Endothelial cell of umbilical vein (primary cell): ENCODE measurements at regions of chr12 and their contacts with region 1.

Region 1: DNA sequence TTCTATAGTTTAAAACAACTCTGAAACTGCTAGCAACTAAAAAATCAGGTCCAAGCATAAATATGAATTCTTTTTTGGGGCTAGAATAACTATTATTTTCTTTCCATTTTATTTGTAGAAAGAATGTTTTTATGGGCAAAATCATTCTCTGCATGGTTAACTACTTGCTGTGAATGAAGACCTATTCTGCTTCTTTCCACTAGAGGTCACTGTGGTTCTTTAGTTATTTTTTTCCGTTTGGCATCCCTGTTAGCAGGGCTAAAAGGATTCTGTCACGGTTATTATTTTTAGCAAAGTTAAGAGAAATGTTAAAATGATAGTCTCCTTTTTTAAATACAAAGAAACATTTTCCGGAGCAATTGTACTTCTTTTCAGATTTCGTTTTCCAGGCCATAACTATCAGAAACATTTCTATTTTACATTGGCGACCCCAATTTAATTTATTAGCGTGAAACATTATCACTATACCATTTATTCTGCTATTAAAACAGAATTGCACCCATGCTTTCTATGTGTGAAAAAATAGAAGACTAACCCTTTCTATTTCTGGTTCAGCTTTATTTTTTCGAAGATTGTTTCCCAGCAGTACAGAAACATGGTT is 404.8 kb downstream of the ATP23 start:
- DNase-seq: peak; percentile 58
- H3K4me3 ChIP-seq: no peak overlapping the region
- H3K27ac ChIP-seq: no peak overlapping the region
- H3K4me1 ChIP-seq: peaks cover 22% of the 10 kb centered on the region
- H3K27me3 ChIP-seq: no peaks in the 10 kb centered on the region
- CTCF ChIP-seq: peak; percentile 34 to 47
- POLR2A ChIP-seq: no peak

Region 2: DNA sequence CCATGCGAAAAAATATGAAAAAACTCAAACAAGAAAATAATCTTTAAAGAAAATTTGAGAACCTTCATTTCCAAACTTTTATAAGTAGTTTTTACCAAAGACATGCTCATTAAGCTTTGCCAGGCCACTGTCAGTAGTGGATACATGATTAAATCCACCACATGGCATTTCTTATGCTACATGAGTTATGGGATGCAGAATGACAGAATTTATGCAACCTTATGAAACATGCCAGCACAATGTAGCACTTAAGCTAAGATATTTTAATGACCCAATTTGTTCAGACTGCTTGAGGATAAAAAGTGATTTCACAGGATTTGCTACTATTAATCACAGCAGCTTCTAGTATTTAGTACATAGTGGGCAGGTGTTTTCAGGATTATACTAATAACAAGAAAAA is 281.5 kb before region 1 on chr12:
- CTCF ChIA-PET with region 1: no interaction called
- POLR2A ChIA-PET with region 1: no interaction called
- dilution Hi-C with region 1: no loop called
- intact Hi-C with region 1: no loop called
- DNase-seq: no peak
- H3K4me3 ChIP-seq: no peak overlapping the region
- H3K27ac ChIP-seq: no peak overlapping the region
- H3K4me1 ChIP-seq: no peaks in the 10 kb centered on the region
- H3K27me3 ChIP-seq: peaks cover 0 to 1% of the 10 kb centered on the region in 2 experiments
- CTCF ChIP-seq: no peak
- POLR2A ChIP-seq: no peak

Region 3: GRCh38 chr12:58105225-58106119 is 240.7 kb before region 1 on chr12:
- CTCF ChIA-PET with region 1: interaction called, 3 read pairs
- POLR2A ChIA-PET with region 1: no interaction called
- dilution Hi-C with region 1: no loop called
- intact Hi-C with region 1: loop called (anchors 2 kb)
- DNase-seq: peak; percentile 41
- H3K4me3 ChIP-seq: no peak overlapping the region
- H3K27ac ChIP-seq: no peak overlapping the region
- H3K4me1 ChIP-seq: no peaks in the 10 kb centered on the region
- H3K27me3 ChIP-seq: peaks cover 0 to 2% of the 10 kb centered on the region in 2 experiments
- CTCF ChIP-seq: peak in 1 of 2 donors; percentile 37
- POLR2A ChIP-seq: no peak

Region 4: GRCh38 chr12:58310828-58311622 is 35.1 kb before region 1 on chr12:
- CTCF ChIA-PET with region 1: no interaction called
- POLR2A ChIA-PET with region 1: no interaction called
- dilution Hi-C with region 1: no loop called
- intact Hi-C with region 1: loop called (anchors 1 kb)
- DNase-seq: peak; percentile 96
- H3K4me3 ChIP-seq: peak overlapping the region in 1 of 3 experiments; percentile 29
- H3K27ac ChIP-seq: peak overlapping the region; percentile 95
- H3K4me1 ChIP-seq: peaks cover 49% of the 10 kb centered on the region
- H3K27me3 ChIP-seq: no peaks in the 10 kb centered on the region
- CTCF ChIP-seq: no peak
- POLR2A ChIP-seq: peak; percentile 54

Region 5: DNA sequence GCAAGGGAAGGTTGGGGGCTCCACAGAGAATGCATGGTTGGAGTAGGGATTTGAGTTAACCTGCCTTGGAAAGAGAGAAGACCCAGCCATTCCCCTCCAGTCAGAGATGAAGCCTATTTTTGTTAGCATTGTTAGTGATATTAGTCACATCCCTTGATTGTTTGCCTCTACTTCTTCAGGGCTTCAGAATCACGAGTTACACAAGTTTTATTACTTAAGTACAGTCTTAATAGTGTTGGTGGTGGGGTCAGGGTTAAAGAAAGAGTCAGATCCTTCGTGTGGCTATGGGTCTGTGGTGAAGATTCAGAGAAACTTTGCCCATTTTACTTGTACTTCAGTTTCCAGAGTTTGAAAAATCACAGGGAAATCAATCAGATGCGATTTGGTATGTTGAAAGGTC is 211.0 kb after region 1 on chr12:
- CTCF ChIA-PET with region 1: no interaction called
- POLR2A ChIA-PET with region 1: no interaction called
- dilution Hi-C with region 1: no loop called
- intact Hi-C with region 1: loop called (anchors 5 kb)
- DNase-seq: peak; percentile 95
- H3K4me3 ChIP-seq: no peak overlapping the region
- H3K27ac ChIP-seq: peak overlapping the region; percentile 87
- H3K4me1 ChIP-seq: peaks cover 13% of the 10 kb centered on the region
- H3K27me3 ChIP-seq: no peaks in the 10 kb centered on the region
- CTCF ChIP-seq: no peak
- POLR2A ChIP-seq: peak; percentile 23

Region 6: DNA sequence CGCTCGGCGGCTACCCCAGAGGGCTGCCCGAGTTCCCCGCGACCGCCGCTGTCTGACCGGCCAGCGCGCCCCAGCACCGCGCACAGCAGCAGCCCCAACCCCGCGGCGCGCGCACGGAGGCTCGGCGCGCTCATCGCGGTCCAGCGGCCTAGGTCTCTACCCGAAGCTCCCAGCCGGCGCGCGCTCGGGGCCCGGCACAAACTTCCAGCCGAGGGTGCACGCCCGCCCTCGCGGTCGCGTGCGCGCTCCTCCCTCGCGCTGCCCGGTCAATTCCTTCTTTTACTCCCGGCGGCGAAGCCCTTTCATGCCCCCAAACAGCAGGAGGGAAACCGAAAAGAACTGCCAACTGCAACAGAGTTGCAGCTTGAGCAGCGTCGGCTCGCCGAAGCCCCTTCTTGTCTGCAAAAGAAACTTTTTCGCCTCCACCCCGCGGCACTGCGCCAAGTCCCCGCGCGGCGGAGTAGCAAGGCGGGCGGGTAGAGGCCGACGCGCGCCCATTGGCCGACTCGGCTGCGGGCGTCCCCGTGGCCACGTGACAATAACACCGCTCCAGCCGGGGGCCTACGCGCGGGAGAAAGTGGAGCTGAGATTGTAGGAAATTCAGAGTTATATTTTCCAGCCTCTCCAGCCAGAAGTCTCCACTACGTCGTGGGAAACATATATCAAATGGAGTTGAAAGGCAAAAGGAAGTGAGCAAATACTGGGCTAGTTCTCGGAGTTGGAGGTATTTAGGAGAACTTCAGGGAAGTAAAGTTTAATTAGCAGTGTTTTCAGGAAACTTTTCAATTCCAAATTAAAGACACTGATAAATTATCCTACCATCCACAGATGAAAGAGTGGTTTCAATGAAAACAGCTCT is 574.2 kb after region 1 on chr12 and contains the start of gene LRIG3:
- CTCF ChIA-PET with region 1: no interaction called
- POLR2A ChIA-PET with region 1: no interaction called
- dilution Hi-C with region 1: no loop called
- intact Hi-C with region 1: loop called (anchors 2 kb)
- DNase-seq: peak; percentile 99
- H3K4me3 ChIP-seq: peak within 1 kb of the TSS; percentile 89 to 99 (median 96)
- H3K27ac ChIP-seq: peak within 1 kb of the TSS; percentile 91
- H3K4me1 ChIP-seq: peaks cover 43% of the 10 kb centered on the region
- H3K27me3 ChIP-seq: no peaks in the 10 kb centered on the region
- CTCF ChIP-seq: no peak
- POLR2A ChIP-seq: no peak
- total RNA-seq, gene LRIG3: 42.9 and 55.5 TPM in 2 replicates

Region 7: GRCh38 chr12:59164991-59165718 is 819.0 kb after region 1 on chr12:
- CTCF ChIA-PET with region 1: interaction called, 11 read pairs
- POLR2A ChIA-PET with region 1: no interaction called
- dilution Hi-C with region 1: no loop called
- intact Hi-C with region 1: loop called (anchors 1 kb)
- DNase-seq: peak; percentile 41
- H3K4me3 ChIP-seq: no peak overlapping the region
- H3K27ac ChIP-seq: no peak overlapping the region
- H3K4me1 ChIP-seq: no peaks in the 10 kb centered on the region
- H3K27me3 ChIP-seq: no peaks in the 10 kb centered on the region
- CTCF ChIP-seq: peak; percentile 17 to 30
- POLR2A ChIP-seq: no peak